H1 (cell line): ENCODE measurements at regions of chr4 and their contacts with region 1.

Region 1: DNA sequence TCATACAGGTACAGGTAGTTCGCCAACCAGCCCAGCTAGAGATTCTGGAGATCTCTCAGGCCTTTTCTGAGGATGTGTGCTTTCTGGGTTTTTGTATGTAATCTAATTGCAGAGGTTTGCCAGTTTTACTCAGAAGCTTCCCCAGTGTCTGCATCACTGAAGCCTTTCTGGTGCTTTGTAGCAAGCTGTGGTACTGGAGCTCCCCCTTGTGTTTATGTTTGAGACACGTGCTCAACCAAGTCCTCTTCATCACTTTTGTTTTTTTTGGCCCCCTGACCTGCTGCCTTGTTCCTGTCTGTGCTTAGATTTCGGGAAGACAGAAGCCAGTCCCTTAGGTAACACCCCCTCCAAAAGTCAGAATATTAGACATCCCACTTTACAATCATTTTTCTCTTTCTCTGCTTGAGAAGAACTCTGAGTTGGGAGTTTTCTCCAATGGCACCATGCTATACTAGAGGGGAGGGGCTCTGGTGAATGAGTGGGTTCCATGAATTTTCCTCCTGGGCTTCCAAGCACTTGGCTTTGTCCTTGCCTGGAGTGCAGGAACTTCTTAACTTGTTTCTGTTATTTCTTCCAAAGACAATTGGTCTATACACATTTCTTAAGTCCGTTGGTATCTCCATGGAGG is 128.4 kb upstream of the TBC1D9 start:
- DNase-seq: peak; percentile 13 to 57
- H3K4me3 ChIP-seq: no peak overlapping the region
- H3K27ac ChIP-seq: no peak overlapping the region
- H3K4me1 ChIP-seq: no peaks in the 10 kb centered on the region
- H3K27me3 ChIP-seq: no peaks in the 10 kb centered on the region
- CTCF ChIP-seq: peak; percentile 30 to 86 (median 83)
- EP300 ChIP-seq: no peak
- POLR2A ChIP-seq: no peak
- RAD21 ChIP-seq: peak; percentile 88 to 93

Region 2: DNA sequence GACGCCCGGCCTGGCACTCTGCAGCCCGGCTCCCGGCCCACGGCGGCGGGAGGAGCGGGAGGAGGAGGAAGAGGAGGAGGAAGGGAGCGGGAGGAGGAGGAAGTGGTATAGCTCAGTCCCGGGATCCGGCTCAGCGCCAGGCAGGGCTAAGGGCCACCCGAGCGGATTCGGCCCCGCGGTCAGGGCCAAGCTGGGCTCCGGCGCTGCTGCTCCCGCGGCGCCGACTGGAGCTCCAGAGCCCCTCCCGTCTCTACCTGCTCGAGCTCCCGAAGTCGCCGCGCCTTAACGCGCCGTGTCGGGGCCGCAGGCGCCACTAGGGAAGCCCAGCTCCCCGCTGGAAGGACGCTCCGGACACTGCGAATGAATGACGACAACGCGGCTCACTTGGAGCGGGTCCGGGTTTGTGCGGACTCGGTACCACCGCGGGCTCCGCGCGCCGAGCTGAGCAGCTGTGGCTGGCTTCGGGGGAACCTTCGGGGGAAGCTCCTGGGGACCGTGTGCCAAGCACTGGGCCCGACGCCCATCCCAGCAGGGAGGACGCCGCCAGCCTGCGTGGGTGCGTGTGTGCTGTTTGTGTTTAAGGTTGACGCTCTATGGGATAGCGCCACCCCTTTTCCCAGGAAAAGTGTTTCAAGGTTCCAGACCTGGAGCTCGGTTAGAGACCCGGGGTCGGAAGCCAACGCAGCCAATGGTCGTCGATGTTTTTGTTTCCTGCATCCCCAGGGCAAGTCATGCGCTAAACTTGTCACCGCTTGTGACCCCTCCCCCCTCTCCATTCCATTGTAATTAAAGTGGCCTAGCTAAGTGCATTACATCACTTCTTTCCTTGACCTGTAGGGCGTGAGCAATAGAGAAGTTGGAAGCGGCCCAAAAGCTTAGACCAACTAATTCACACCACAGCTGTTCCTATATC is 128.0 kb before region 1 on chr4 and contains the start of gene TBC1D9:
- CTCF ChIA-PET with region 1: no interaction called
- POLR2A ChIA-PET with region 1: no interaction called
- DNase-seq: peak; percentile 79 to 91
- H3K4me3 ChIP-seq: peak within 1 kb of the TSS; percentile 23 to 67 (median 57)
- H3K27ac ChIP-seq: 0 out of 2 replicates have a peak within 1 kb of the TSS, but pooled peaks have one; percentile 1
- H3K4me1 ChIP-seq: peaks cover 0 to 6% (median 4%) of the 10 kb centered on the region in 4 experiments; a peak in 3 of 7 replicates
- H3K27me3 ChIP-seq: peaks cover 0 to 58% (median 38%) of the 10 kb centered on the region in 4 experiments; a peak in 6 of 7 replicates
- CTCF ChIP-seq: peak in 1 of 3 experiments; percentile 16; a peak in 1 of 4 replicates
- EP300 ChIP-seq: peak in 1 of 2 experiments; percentile 86; a peak in 1 of 3 replicates
- POLR2A ChIP-seq: peak in 1 of 2 experiments; percentile 51; a peak in 2 of 3 replicates
- RAD21 ChIP-seq: no peak; a peak in 1 of 4 replicates
- total RNA-seq, gene TBC1D9: 1.0 and 1.2 TPM in 2 replicates

Region 3: DNA sequence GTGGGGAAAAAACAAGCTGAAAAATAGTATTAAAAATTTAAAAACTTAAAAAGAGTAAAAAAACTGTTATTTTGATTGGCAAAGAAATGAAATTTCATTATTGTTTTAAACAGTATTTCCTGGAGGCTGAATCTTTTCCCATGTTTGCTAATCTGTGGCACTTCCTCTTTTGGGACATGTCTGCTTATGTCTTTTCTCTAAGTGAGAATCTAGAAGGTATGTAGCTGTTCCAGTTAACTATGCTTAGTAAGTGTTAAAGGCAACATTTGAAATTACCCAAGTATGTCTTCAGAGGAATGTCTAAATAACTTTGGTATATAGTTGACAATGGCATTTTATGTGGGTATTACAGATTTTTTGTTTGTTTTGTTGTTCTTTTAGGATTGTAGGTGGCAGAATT is 46.8 kb before region 1 on chr4:
- CTCF ChIA-PET with region 1: no interaction called
- POLR2A ChIA-PET with region 1: no interaction called
- DNase-seq: no peak
- H3K4me3 ChIP-seq: no peak overlapping the region
- H3K27ac ChIP-seq: no peak overlapping the region
- H3K4me1 ChIP-seq: no peaks in the 10 kb centered on the region
- H3K27me3 ChIP-seq: no peaks in the 10 kb centered on the region
- CTCF ChIP-seq: no peak
- EP300 ChIP-seq: no peak
- POLR2A ChIP-seq: no peak
- RAD21 ChIP-seq: no peak

Region 4: DNA sequence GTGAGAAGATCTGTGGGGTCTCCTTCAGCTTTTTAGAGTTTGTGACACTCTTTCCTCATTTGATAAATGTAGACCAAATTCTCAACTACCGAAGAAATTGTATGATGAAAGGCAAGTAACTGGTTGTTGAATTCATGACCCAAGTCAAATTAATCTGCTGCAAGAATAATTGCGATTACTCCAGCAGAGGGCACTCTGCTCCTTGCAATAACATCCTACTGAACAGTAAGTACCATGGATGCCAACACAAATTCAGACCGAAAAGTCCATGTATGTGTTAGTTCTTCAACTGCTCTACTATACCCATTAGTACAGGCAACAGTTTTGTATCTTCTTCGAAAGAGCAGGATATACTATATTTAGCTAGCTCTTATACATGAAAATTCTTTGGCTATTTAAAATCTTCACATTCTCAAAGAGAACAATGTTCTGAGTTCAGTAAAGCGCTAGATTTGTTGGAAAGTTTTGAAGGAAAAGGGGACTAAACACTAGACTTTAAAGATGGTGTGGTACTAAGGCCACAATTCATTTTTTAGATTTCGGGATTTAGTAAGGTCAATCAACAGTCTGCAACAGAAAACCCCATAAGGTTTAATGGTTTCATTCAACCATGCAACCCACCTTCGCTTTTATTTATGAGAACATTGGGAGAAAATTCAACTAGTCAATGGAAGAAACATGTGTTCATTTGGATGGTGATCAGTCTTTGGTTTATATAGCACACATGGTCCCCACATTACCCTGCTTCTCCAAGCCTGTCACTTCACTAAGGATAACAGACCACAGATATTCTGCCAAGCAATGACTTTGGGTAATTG is 23.0 kb before region 1 on chr4:
- CTCF ChIA-PET with region 1: interaction called, 68 read pairs
- POLR2A ChIA-PET with region 1: no interaction called
- DNase-seq: peak; percentile 36 to 58
- H3K4me3 ChIP-seq: no peak overlapping the region
- H3K27ac ChIP-seq: no peak overlapping the region
- H3K4me1 ChIP-seq: peaks cover 0 to 5% (median 2%) of the 10 kb centered on the region in 4 experiments; a peak in 2 of 7 replicates
- H3K27me3 ChIP-seq: no peaks in the 10 kb centered on the region
- CTCF ChIP-seq: peak in 2 of 3 experiments; percentile 78; a peak in 3 of 4 replicates
- EP300 ChIP-seq: no peak
- POLR2A ChIP-seq: no peak
- RAD21 ChIP-seq: peak; percentile 95

Region 5: DNA sequence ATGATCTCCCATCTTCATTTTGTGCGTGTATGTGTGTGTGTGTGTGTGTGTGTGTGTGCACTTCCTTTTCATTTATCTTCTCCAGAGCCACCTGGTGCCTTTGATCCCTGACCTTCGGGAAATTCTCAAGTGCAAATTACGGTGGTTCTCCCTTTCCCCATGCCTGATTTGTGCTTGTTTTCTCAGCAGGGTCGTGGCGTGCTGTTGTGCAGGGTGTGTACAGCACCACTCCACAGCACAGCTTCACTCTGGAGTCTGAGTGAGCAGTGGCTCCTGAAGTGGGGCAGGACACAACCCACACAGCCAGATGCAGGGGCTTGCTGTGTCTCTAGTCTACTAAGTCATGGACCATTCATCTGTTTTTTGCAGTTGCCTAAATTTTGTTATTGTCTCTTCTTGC is 14.1 kb before region 1 on chr4:
- CTCF ChIA-PET with region 1: interaction called, 23 read pairs
- POLR2A ChIA-PET with region 1: interaction called, 3 read pairs
- DNase-seq: no peak
- H3K4me3 ChIP-seq: no peak overlapping the region
- H3K27ac ChIP-seq: no peak overlapping the region
- H3K4me1 ChIP-seq: no peaks in the 10 kb centered on the region; a peak in 2 of 7 replicates
- H3K27me3 ChIP-seq: no peaks in the 10 kb centered on the region
- CTCF ChIP-seq: no peak
- EP300 ChIP-seq: no peak
- POLR2A ChIP-seq: no peak
- RAD21 ChIP-seq: no peak

Region 6: DNA sequence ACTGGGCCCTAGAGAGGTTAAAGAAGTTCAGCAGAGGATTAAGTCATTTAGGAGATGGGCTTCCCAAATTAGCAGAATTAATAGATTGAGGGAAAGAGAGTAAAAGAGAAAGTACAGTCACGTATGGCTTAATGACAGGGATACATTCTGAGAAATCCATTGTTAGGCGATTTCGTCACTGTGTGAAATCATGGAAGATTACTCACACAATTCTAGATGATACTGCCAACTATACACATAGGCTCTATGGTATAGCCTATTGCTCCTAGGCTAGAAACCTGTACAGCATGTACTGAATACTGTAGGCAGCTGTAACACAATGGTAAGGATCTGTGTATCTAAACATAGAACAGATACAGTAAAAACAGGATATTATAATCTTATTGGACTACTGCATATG is 68.2 kb after region 1 on chr4:
- CTCF ChIA-PET with region 1: no interaction called
- POLR2A ChIA-PET with region 1: no interaction called
- DNase-seq: no peak
- H3K4me3 ChIP-seq: no peak overlapping the region
- H3K27ac ChIP-seq: no peak overlapping the region
- H3K4me1 ChIP-seq: peaks cover 0 to 5% (median 1%) of the 10 kb centered on the region in 4 experiments; a peak in 1 of 7 replicates
- H3K27me3 ChIP-seq: no peaks in the 10 kb centered on the region
- CTCF ChIP-seq: no peak
- EP300 ChIP-seq: no peak
- POLR2A ChIP-seq: no peak
- RAD21 ChIP-seq: no peak